WTC11 (cell line): ENCODE measurements at regions of chr11 and their contacts with region 1.

Region 1: GRCh38 chr11:35822815-35823495 is 120.9 kb upstream of the LDLRAD3 start:
- DNase-seq: no peak
- ATAC-seq: no peak
- H3K4me3 Mint-ChIP-seq: no peak overlapping the region
- H3K27ac Mint-ChIP-seq: no peak overlapping the region
- H3K4me1 Mint-ChIP-seq: peaks cover 15% of the 10 kb centered on the region
- H3K27me3 Mint-ChIP-seq: peaks cover 8% of the 10 kb centered on the region; the same call in 1 of the 2 replicates
- CTCF ChIP-seq: no peak

Region 2: GRCh38 chr11:35272391-35272902 is 550.5 kb before region 1 on chr11:
- CTCF ChIA-PET with region 1: no interaction called
- POLR2A ChIA-PET with region 1: no interaction called
- DNase-seq: no peak
- ATAC-seq: no peak
- H3K4me3 Mint-ChIP-seq: no peak overlapping the region
- H3K27ac Mint-ChIP-seq: no peak overlapping the region
- H3K4me1 Mint-ChIP-seq: peaks cover 24% of the 10 kb centered on the region
- H3K27me3 Mint-ChIP-seq: no peaks in the 10 kb centered on the region; the same call in 1 of the 2 replicates
- CTCF ChIP-seq: no peak

Region 3: GRCh38 chr11:35478471-35479091 is 344.4 kb before region 1 on chr11:
- CTCF ChIA-PET with region 1: interaction called, 15 read pairs
- POLR2A ChIA-PET with region 1: no interaction called
- DNase-seq: no peak
- ATAC-seq: peak; percentile 34
- H3K4me3 Mint-ChIP-seq: 0 out of 2 replicates have a peak overlapping the region, but pooled peaks have one; percentile 3
- H3K27ac Mint-ChIP-seq: no peak overlapping the region
- H3K4me1 Mint-ChIP-seq: peaks cover 19% of the 10 kb centered on the region
- H3K27me3 Mint-ChIP-seq: peaks cover 8% of the 10 kb centered on the region; the same call in 1 of the 2 replicates
- CTCF ChIP-seq: no peak

Region 4: GRCh38 chr11:35747668-35748067 is 75.3 kb before region 1 on chr11:
- CTCF ChIA-PET with region 1: interaction called, 13 read pairs
- POLR2A ChIA-PET with region 1: no interaction called
- DNase-seq: no peak
- ATAC-seq: no peak
- H3K4me3 Mint-ChIP-seq: no peak overlapping the region
- H3K27ac Mint-ChIP-seq: no peak overlapping the region
- H3K4me1 Mint-ChIP-seq: peaks cover 11% of the 10 kb centered on the region
- H3K27me3 Mint-ChIP-seq: no peaks in the 10 kb centered on the region
- CTCF ChIP-seq: no peak

Region 5: DNA sequence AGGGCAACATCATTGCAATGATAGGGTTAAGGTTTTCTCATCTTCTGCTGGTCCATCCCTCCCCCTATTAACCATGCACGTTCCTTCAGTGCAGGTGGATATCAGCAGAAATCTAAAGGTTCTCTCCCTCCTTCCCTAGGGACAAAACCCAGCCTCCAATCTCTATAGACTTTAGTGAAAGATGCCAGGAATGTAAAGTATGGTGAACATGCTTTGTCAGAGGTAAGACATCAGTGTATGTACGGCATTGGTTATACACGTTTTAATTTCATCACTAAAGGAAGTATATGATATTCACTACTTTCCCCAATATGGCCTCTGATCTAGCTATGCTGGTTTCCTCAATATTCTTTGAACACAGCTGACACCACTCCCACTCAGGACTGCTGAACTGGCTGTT is 39.7 kb after region 1 on chr11:
- CTCF ChIA-PET with region 1: interaction called, 16 read pairs
- POLR2A ChIA-PET with region 1: no interaction called
- DNase-seq: no peak
- ATAC-seq: no peak
- H3K4me3 Mint-ChIP-seq: no peak overlapping the region
- H3K27ac Mint-ChIP-seq: no peak overlapping the region
- H3K4me1 Mint-ChIP-seq: no peaks in the 10 kb centered on the region
- H3K27me3 Mint-ChIP-seq: no peaks in the 10 kb centered on the region; the same call in 1 of the 2 replicates
- CTCF ChIP-seq: no peak

Region 6: GRCh38 chr11:35980686-35981390 is 157.9 kb after region 1 on chr11:
- CTCF ChIA-PET with region 1: interaction called, 17 read pairs
- POLR2A ChIA-PET with region 1: no interaction called
- DNase-seq: no peak
- ATAC-seq: no peak
- H3K4me3 Mint-ChIP-seq: 0 out of 2 replicates have a peak overlapping the region, but pooled peaks have one; percentile 8
- H3K27ac Mint-ChIP-seq: peak overlapping the region; percentile 61; the same call in 1 of the 2 replicates
- H3K4me1 Mint-ChIP-seq: peaks cover 53% of the 10 kb centered on the region
- H3K27me3 Mint-ChIP-seq: no peaks in the 10 kb centered on the region
- CTCF ChIP-seq: no peak

Region 7: DNA sequence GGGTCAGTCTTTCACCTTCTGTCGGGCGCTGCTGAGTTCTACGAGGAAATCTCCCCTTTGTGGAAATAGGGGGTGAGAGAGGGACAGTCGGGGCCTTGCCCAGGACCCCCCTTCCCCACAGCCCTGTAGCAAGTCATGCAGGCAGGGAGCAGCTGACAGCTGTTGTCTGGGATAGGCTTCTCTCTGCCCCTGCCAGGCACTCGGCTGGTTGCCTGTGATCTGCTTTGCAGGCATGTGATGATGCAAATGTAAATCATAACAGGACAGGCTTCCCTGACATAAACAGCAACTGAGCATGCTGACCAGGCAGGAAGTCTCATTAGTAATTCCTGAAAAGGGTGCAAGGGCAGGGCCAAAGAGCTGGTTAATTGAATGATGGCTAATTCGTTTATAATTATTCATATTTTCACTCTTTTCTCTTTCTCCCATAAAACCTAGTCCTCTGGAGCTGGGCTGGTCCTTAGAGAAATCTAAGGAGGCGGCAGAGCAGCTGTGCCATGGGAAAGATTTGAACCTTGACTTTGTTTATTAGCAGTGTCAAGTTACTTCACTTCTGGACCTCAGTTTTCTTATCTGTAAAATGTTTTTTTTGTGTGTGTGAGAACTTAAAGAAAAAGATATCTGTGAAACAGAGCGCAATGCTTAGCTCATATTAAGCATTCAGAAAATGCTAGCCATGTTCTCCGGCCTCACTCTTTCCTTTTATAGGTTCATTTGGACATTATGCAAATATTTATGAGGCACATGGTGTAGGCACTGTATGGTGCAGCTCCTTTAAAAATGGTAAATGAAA is 250.7 kb after region 1 on chr11:
- CTCF ChIA-PET with region 1: interaction called, 217 read pairs
- POLR2A ChIA-PET with region 1: interaction called, 11 read pairs
- DNase-seq: no peak
- ATAC-seq: no peak
- H3K4me3 Mint-ChIP-seq: no peak overlapping the region
- H3K27ac Mint-ChIP-seq: peak overlapping the region; percentile 82
- H3K4me1 Mint-ChIP-seq: peaks cover 59% of the 10 kb centered on the region
- H3K27me3 Mint-ChIP-seq: no peaks in the 10 kb centered on the region; the same call in 1 of the 2 replicates
- CTCF ChIP-seq: no peak

Region 8: GRCh38 chr11:36196411-36196998 is 373.6 kb after region 1 on chr11:
- CTCF ChIA-PET with region 1: interaction called, 18 read pairs
- POLR2A ChIA-PET with region 1: no interaction called
- DNase-seq: no peak
- ATAC-seq: 0 out of 2 replicates have a peak, but pooled peaks have one; percentile 22
- H3K4me3 Mint-ChIP-seq: no peak overlapping the region
- H3K27ac Mint-ChIP-seq: no peak overlapping the region
- H3K4me1 Mint-ChIP-seq: peaks cover 24% of the 10 kb centered on the region
- H3K27me3 Mint-ChIP-seq: no peaks in the 10 kb centered on the region
- CTCF ChIP-seq: no peak